ENCODE measurements at regions of chr19 and their contacts with region 1.

Region 1: GRCh38 chr19:6164906-6165531 is 29.6 kb downstream of the ACSBG2 start:
- H3K4me3 Mint-ChIP-seq: no peak overlapping the region
- H3K27ac Mint-ChIP-seq: no peak overlapping the region
- H3K4me1 Mint-ChIP-seq: peaks cover 24% of the 10 kb centered on the region
- H3K27me3 Mint-ChIP-seq: peaks cover 2% of the 10 kb centered on the region

Region 2: DNA sequence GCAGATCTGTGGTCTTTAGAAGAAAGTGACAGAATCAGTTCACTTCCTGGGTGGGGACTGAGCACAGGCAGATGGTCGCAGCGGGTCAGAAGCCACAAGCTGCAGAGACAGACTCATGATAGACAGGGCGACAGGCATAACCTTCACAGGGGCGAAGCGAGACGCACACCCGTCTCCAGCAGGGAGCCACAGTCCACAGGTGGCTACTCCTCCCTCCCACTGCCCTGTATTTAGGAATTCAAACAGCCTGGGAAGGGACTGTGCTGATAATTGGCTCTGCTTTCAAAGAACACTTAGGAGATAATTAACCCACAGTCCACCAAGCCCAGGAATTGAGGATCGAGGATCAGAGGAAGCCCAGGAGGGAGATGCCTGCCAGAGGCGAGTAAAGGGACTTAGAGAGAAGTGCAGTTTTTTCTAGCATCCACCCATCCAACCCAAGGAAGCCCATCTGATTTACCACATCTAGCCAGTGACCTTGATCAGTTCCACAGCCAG is 77.9 kb before region 1 on chr19:
- intact Hi-C with region 1: no loop called
- H3K4me3 Mint-ChIP-seq: peak overlapping the region; percentile 11
- H3K27ac Mint-ChIP-seq: peak overlapping the region; percentile 96
- H3K4me1 Mint-ChIP-seq: peaks cover 31% of the 10 kb centered on the region
- H3K27me3 Mint-ChIP-seq: no peaks in the 10 kb centered on the region

Region 3: DNA sequence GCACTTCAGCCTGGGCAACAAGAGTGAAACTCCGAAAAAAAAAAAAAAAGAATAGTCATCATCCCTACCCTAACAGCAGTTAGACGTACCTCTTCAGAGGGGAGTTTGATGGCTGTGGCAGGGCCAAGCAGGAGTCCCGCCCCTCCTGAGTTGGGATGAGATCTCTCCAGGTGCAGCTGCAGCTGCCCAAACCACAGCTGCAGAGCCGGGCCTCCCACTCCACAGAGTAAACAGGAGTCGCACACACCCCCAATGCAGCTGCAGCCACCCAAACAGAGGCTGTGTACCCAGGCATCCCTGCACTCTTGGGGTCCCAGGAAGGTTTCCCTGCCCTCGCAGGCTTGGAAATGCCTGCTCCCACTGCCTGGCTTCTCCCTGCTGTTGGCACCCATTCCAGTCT is 132.2 kb after region 1 on chr19:
- intact Hi-C with region 1: loop called (anchors 2 kb)
- H3K4me3 Mint-ChIP-seq: no peak overlapping the region
- H3K27ac Mint-ChIP-seq: no peak overlapping the region
- H3K4me1 Mint-ChIP-seq: no peaks in the 10 kb centered on the region
- H3K27me3 Mint-ChIP-seq: peaks cover 5% of the 10 kb centered on the region

Region 4: DNA sequence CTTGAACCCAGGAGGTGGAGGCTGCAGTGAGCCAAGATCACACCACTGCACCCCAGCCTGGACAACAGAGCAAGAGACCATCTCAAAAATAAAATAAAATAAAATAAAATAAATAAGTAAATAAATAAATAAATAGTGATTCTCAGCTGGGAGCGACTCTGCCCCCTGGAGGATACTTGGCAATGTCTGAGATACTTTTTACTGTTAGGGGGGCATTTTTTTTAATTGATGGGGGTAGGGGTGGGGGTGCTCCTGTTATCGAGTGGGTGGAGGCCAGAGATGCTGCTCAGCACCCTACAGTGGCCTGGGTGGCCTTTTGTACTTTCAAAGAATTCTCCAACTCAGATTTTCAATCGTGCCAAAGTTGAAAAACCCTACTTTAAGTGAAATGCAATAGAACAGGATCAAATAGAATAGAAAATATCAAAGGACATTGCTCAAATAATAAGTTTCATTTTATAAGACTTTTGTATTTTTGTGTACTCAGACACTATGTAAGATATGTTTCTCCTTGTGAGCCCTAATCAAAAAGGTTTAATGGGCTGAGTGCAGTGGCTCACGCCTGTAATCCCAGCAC is 189.2 kb after region 1 on chr19:
- intact Hi-C with region 1: loop called (anchors 5 kb)
- H3K4me3 Mint-ChIP-seq: no peak overlapping the region
- H3K27ac Mint-ChIP-seq: no peak overlapping the region
- H3K4me1 Mint-ChIP-seq: peaks cover 1% of the 10 kb centered on the region
- H3K27me3 Mint-ChIP-seq: no peaks in the 10 kb centered on the region

Measured in dendritic cell treated with granulocyte-macrophage colony-stimulating factor and Interleukin-4, amounts not matched to agents 40 ng/mL and 50 ng/mL, for 4 days (primary cell).